ENCODE measurements at regions of chr22 and their contacts with region 1.

Region 1: DNA sequence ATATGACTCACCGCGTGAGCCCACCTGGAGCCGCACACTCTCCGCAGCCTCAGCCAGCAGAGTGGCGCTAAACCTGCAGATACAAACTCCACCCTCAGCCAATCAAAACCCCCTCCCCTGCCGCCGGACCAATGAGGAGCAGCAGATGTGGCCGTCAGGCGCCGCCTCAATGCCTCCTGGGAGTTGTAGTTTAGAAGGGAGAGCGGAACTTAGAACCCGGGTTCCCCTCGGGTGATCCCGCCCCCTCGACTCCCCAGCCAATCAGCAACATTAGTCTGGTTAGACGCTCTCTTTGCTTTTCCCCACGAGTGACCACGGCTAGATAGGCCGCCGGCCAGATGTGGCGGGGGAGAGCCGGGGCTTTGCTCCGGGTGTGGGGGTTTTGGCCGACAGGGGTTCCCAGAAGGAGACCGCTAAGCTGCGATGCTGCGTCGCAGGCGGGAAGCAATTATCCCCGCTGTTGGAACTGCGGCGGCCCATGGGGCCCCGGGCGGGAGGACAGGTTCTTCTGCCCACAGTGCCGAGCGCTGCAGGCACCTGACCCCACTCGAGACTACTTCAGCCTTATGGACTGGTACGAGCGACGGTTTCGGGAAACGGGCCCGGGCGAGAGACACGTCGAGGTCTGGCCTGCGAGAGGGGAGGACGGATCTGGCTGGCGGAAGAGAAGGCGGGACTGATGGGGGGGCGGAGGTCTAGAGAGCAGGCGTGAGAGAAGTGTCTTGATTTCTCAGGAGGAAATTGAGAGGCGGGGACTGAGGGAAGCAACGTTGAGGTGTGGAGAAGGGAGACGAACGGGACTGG is at the starts of genes CHEK2 and HSCB:
- DNase-seq: peak; percentile 99
- ATAC-seq: peak; percentile 99
- total RNA-seq, gene CHEK2: 2.4 TPM
- total RNA-seq, gene HSCB: 9.3 TPM

Region 2: DNA sequence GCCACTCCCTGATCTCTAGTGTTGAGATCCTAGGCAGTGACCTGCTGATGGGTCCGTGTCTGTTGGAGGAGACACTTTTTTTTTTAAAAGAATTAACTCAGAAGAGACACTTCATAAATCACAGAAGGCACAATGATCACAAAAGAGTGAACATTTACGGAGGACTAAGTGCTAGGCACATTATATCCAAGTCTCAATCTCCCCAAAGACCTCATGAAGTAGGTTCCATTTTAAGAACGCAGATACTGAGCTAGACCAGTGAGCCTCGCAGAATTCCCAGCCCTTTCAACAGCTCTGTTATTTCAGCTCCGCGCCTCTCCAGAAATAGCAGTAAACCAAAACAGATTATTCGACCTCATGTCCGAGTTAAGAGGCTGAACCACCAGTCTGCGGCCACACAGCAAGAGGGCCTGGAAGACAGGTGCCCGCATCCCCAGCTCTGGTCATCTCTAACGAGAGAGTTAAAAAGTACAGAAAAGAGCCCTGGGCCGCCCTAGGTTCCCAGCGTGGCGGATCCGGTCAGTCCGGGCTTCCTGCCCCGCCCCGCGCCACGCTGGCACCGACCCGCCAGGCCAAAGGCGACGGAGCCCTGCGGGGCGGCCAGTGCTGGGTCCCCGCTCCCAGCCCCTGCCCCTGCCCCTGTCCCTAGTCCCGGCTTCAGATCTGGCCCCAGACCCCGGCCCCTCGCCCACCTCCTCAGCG is 57.8 kb after region 1 on chr22:
- intact Hi-C with region 1: loop called (anchors 2 kb)
- DNase-seq: peak; percentile 85
- ATAC-seq: peak; percentile 87

Measured in Right ventricle myocardium superior (tissue), 1 donor.